Calu3 (cell line): ENCODE measurements at regions of chr6 and their contacts with region 1.

Region 1: DNA sequence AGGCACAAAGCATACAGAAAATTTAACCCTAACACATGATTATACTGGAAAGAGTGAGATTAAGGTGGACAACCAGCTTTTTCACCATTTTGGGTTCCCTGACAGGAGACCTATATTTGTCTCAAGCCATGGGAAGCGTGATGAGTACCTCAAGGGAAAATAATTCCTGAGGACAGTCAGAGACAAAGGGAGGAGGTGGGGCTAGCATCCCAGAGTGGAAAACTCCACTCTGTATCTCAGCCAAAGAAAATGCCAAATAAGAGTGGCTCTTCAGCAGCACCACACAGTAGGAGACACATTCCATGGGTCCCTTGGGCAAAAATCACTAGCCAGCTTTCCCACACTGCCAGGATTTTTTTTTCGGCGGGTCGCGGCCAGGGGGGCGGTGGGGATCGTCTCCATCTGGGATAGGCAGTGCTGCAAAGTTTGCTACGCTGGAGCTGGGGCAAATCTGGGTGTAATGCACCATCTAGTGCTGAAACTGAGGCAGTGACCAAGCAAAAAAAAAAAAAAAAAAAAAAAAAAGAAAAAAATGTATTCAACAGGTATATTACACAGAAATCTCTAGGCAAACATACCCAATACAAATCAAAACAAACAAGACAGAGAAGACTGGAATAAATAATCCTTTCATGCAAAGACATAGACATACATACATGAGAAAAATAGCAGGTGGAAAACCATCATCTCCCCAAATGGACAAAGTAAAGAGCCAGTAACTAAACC is 77.3 kb upstream of the SLC35F1 start:
- DNase-seq: peak; percentile 33
- H3K4me3 Mint-ChIP-seq: peak overlapping the region; percentile 55
- H3K27ac Mint-ChIP-seq: no peak overlapping the region
- H3K4me1 Mint-ChIP-seq: peaks cover 6% of the 10 kb centered on the region
- H3K27me3 Mint-ChIP-seq: no peaks in the 10 kb centered on the region
- CTCF ChIP-seq: no peak

Region 2: DNA sequence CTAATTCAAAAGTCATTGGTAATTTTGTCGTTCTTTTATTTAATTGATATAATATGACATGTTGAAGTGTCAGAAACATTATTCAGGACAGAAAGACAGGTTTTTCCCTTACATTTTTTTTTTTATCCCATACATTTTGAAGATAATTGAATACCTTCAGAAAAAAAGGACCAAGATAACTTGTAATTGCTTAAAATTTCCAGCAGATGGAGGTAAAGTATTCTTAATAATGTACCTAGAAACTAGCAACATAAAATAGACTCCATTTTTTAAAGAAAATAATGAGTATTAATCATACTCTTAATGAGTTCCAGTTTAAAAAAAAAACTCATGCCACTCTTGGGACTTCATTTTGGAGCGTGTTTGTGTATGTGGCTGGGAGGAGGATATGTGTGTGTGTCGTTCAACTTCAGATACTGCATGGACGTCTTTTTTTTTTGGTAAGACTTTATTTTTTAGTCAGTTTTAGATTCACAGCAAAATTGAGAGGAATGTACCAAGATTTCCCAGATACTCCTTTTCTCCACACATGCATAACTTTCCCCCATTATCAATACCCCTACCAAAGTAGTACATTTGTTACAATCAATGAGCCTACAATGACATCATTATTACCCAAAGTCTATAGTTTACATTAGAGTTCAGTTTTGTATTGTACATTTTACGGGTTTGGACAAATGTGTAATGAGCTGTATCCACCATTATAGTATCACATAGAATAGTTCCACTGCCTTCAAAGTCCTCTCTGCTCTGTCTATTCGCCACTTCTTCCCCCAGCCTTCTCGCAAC is 483.4 kb before region 1 on chr6:
- CTCF ChIA-PET with region 1: no interaction called
- intact Hi-C with region 1: loop called (anchors 1 kb)
- DNase-seq: no peak
- H3K4me3 Mint-ChIP-seq: no peak overlapping the region
- H3K27ac Mint-ChIP-seq: peak overlapping the region; percentile 8
- H3K4me1 Mint-ChIP-seq: no peaks in the 10 kb centered on the region
- H3K27me3 Mint-ChIP-seq: peaks cover 12% of the 10 kb centered on the region
- CTCF ChIP-seq: peak; percentile 56